ENCODE measurements at regions of chr6 and their contacts with region 1.

Region 1: GRCh38 chr6:28794175-28795002 is 129.4 kb downstream of the TRIM27 start:
- DNase-seq: peak in 1 of 2 experiments; percentile 68
- ATAC-seq: peak; percentile 68 to 72
- H3K4me3 ChIP-seq: peak overlapping the region; percentile 42
- H3K27ac ChIP-seq: peak overlapping the region in 1 of 2 experiments; percentile 64; a peak in 3 of 6 replicates
- H3K4me1 ChIP-seq: peaks cover 12% of the 10 kb centered on the region
- CTCF ChIP-seq: no peak
- EP300 ChIP-seq: no peak
- POLR2A ChIP-seq: no peak
- RAD21 ChIP-seq: no peak

Region 2: GRCh38 chr6:28553986-28554881 is 240.2 kb before region 1 on chr6:
- CTCF ChIA-PET with region 1: no interaction called
- POLR2A ChIA-PET with region 1: no interaction called
- DNase-seq: no peak
- ATAC-seq: no peak
- H3K4me3 ChIP-seq: no peak overlapping the region
- H3K27ac ChIP-seq: no peak overlapping the region
- H3K4me1 ChIP-seq: no peaks in the 10 kb centered on the region
- CTCF ChIP-seq: no peak
- EP300 ChIP-seq: no peak
- POLR2A ChIP-seq: no peak
- RAD21 ChIP-seq: no peak

Region 3: GRCh38 chr6:28769626-28770402 is 24.6 kb before region 1 on chr6:
- CTCF ChIA-PET with region 1: interaction called, 12 read pairs
- POLR2A ChIA-PET with region 1: interaction called, 3 read pairs
- DNase-seq: peak; percentile 35 to 61
- ATAC-seq: peak; percentile 77 to 82
- H3K4me3 ChIP-seq: no peak overlapping the region
- H3K27ac ChIP-seq: no peak overlapping the region
- H3K4me1 ChIP-seq: no peaks in the 10 kb centered on the region
- CTCF ChIP-seq: 0 out of 3 replicates have a peak, but pooled peaks have one; percentile 15
- EP300 ChIP-seq: no peak
- POLR2A ChIP-seq: no peak
- RAD21 ChIP-seq: peak; percentile 17 to 29; a peak in 1 of 5 replicates

Region 4: DNA sequence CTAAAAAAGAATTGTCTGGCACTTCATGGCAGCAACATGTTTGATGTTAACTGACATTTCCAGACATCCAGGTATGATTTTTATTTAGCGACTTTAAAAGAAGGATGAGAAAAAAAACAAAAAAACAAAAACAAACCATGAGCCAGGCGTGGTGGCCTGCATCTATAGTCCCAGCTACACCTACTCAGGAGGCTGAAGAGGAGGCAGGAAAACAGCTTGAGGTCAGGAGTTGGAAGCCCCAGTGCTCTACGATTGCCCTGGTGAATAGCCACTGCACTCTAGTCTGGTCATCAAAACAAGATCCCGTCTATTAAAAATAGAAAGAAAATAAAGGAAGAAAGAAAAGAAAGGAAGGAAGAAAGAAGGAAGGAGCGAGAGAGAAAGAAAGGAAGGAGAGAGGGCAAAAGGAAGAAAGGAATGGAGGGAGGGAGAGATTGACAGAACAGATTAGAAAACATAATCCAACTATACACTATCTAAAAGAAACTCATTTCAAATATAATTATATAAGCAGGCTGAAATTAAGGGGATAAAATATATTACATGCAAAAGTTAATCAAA is 12.2 kb before region 1 on chr6:
- CTCF ChIA-PET with region 1: no interaction called
- POLR2A ChIA-PET with region 1: no interaction called
- DNase-seq: no peak
- ATAC-seq: no peak
- H3K4me3 ChIP-seq: no peak overlapping the region
- H3K27ac ChIP-seq: no peak overlapping the region
- H3K4me1 ChIP-seq: no peaks in the 10 kb centered on the region
- CTCF ChIP-seq: no peak
- EP300 ChIP-seq: no peak
- POLR2A ChIP-seq: no peak
- RAD21 ChIP-seq: no peak

Region 5: GRCh38 chr6:28809947-28810658 is 15.7 kb after region 1 on chr6:
- CTCF ChIA-PET with region 1: interaction called, 12 read pairs
- POLR2A ChIA-PET with region 1: interaction called, 3 read pairs
- DNase-seq: peak in 1 of 2 experiments; percentile 57
- ATAC-seq: peak; percentile 73 to 78
- H3K4me3 ChIP-seq: peak overlapping the region; percentile 61
- H3K27ac ChIP-seq: no peak overlapping the region
- H3K4me1 ChIP-seq: peaks cover 11% of the 10 kb centered on the region; the same call in 1 of the 3 replicates
- CTCF ChIP-seq: peak; percentile 41; the same call in 2 of the 3 replicates
- EP300 ChIP-seq: no peak
- POLR2A ChIP-seq: no peak
- RAD21 ChIP-seq: peak; percentile 32 to 37; a peak in 3 of 5 replicates